ENCODE measurements at regions of chr2 and their contacts with region 1.

Region 1: DNA sequence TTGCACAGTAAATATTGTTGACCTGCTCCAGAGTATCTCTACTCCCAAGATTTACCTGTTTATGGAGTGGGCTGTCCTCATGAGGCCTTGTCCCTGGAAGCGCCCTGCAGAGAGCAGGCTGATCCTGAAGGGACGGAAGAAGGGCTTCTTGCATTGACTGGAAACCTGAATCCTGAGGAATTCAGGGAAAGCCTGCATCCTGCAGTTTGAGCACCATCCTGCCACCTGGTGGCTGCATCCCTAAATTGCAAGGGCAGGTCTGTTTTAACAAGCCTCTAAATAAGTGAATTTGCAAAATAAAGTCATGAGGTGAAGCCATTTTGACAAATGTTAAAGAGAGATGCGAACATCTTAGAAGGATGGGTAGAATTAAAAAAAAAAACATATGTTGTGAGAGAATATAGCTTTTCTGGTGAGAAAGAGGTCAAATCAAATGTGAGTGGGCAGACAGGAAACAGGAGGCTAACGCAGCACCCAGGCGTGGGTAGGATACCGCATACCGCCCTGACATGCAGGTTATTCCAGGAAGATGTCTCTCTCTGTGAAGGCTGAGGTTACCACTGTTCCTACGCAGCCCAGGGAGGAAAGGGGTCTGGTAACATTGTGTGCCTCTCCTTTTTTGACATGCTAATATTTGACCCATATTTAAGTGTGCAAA is 754.9 kb downstream of the RNF144A start:
- DNase-seq: peak; percentile 51
- H3K4me3 Mint-ChIP-seq: peak overlapping the region; percentile 63
- H3K27ac Mint-ChIP-seq: peak overlapping the region; percentile 97
- H3K4me1 Mint-ChIP-seq: peaks cover 60% of the 10 kb centered on the region
- H3K27me3 Mint-ChIP-seq: no peaks in the 10 kb centered on the region

Region 2: GRCh38 chr2:7530001-7530400 is 142.2 kb before region 1 on chr2:
- intact Hi-C with region 1: loop called (anchors 1 kb)
- DNase-seq: no peak
- H3K4me3 Mint-ChIP-seq: no peak overlapping the region
- H3K27ac Mint-ChIP-seq: peak overlapping the region; percentile 57
- H3K4me1 Mint-ChIP-seq: peaks cover 50% of the 10 kb centered on the region
- H3K27me3 Mint-ChIP-seq: no peaks in the 10 kb centered on the region

Region 3: GRCh38 chr2:7620255-7620654 is 51.9 kb before region 1 on chr2:
- intact Hi-C with region 1: loop called (anchors 2 kb)
- DNase-seq: no peak
- H3K4me3 Mint-ChIP-seq: no peak overlapping the region
- H3K27ac Mint-ChIP-seq: peak overlapping the region; percentile 25
- H3K4me1 Mint-ChIP-seq: peaks cover 35% of the 10 kb centered on the region
- H3K27me3 Mint-ChIP-seq: no peaks in the 10 kb centered on the region

Region 4: GRCh38 chr2:7692657-7693161 is 20.6 kb after region 1 on chr2:
- intact Hi-C with region 1: loop called (anchors 2 kb)
- DNase-seq: no peak
- H3K4me3 Mint-ChIP-seq: peak overlapping the region; percentile 3
- H3K27ac Mint-ChIP-seq: peak overlapping the region; percentile 85
- H3K4me1 Mint-ChIP-seq: peaks cover 40% of the 10 kb centered on the region
- H3K27me3 Mint-ChIP-seq: no peaks in the 10 kb centered on the region

Region 5: GRCh38 chr2:7758073-7758759 is 86.1 kb after region 1 on chr2:
- intact Hi-C with region 1: loop called (anchors 5 kb)
- DNase-seq: no peak
- H3K4me3 Mint-ChIP-seq: no peak overlapping the region
- H3K27ac Mint-ChIP-seq: peak overlapping the region; percentile 78
- H3K4me1 Mint-ChIP-seq: peaks cover 18% of the 10 kb centered on the region
- H3K27me3 Mint-ChIP-seq: no peaks in the 10 kb centered on the region